H1 (cell line): ENCODE measurements at regions of chr12 and their contacts with region 1.

Region 1: DNA sequence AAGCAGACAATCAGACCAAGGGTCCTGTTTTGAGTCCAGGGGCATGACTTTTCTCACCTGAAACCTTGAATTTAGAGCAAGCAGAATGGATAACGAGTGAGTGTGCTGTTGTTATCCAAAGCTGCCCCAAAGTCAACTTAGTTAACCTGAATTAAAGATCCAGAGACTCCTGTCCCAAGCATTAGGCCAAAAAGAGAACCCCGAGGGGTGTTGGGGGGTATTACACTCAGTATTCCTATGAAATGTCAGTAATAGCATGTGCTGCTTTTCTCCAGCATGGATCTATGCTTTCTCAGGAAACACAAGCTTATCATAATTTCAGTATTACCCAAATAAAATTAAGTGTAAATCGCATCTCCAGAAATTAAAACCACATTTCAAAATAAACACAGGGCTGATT is 19.0 kb downstream of the EIF4B start:
- DNase-seq: no peak
- H3K4me3 ChIP-seq: no peak overlapping the region
- H3K27ac ChIP-seq: no peak overlapping the region
- H3K4me1 ChIP-seq: no peaks in the 10 kb centered on the region
- H3K27me3 ChIP-seq: no peaks in the 10 kb centered on the region
- CTCF ChIP-seq: no peak
- EP300 ChIP-seq: no peak
- POLR2A ChIP-seq: no peak
- RAD21 ChIP-seq: no peak

Region 2: DNA sequence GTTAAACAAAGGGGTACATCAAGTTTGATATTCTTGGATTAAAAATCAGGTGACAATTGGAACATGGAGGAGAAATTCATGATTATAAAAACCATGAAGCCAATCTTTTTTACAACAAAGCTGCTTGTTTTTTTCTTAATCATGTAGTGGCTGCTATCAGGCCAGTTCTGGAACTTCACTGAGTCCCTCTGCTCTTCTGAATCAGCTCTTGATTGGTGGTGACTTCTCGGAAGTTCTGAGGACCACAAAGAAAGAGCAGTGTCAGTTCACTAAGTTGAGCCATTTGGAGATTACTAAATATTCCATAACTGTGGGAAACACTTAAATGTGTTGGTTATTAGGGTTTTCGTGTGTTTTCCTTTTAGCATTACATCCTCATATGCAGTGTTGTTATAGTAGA is 10.5 kb before region 1 on chr12:
- CTCF ChIA-PET with region 1: interaction called, 12 read pairs
- POLR2A ChIA-PET with region 1: interaction called, 711 read pairs
- DNase-seq: no peak
- H3K4me3 ChIP-seq: no peak overlapping the region
- H3K27ac ChIP-seq: no peak overlapping the region
- H3K4me1 ChIP-seq: no peaks in the 10 kb centered on the region; a peak in 1 of 7 replicates
- H3K27me3 ChIP-seq: no peaks in the 10 kb centered on the region
- CTCF ChIP-seq: no peak
- EP300 ChIP-seq: no peak
- POLR2A ChIP-seq: no peak
- RAD21 ChIP-seq: no peak

Region 3: DNA sequence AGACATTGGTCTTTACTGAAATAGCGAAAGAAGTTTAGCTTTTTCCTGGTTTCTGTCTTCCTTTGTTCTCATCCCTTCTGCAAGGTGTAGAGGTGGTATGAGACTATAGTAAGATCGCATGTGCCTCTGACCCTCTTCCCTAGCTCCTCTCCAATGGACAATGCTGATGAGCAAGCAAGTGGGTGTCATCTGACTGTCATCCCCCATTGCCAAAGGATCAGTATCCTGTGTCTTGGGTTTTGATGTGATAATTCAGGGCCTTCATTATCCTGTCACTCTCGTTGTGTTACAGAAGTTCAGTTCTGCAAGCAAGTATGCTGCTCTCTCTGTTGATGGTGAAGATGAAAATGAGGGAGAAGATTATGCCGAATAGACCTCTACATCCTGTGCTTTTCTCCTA is 14.6 kb after region 1 on chr12:
- CTCF ChIA-PET with region 1: interaction called, 32 read pairs
- POLR2A ChIA-PET with region 1: interaction called, 97 read pairs
- DNase-seq: no peak
- H3K4me3 ChIP-seq: no peak overlapping the region
- H3K27ac ChIP-seq: no peak overlapping the region
- H3K4me1 ChIP-seq: peaks cover 2 to 15% (median 9%) of the 10 kb centered on the region in 4 experiments; a peak in 6 of 7 replicates
- H3K27me3 ChIP-seq: peaks cover 0 to 9% (median 8%) of the 10 kb centered on the region in 4 experiments; a peak in 6 of 7 replicates
- CTCF ChIP-seq: no peak
- EP300 ChIP-seq: no peak
- POLR2A ChIP-seq: no peak
- RAD21 ChIP-seq: no peak

Region 4: DNA sequence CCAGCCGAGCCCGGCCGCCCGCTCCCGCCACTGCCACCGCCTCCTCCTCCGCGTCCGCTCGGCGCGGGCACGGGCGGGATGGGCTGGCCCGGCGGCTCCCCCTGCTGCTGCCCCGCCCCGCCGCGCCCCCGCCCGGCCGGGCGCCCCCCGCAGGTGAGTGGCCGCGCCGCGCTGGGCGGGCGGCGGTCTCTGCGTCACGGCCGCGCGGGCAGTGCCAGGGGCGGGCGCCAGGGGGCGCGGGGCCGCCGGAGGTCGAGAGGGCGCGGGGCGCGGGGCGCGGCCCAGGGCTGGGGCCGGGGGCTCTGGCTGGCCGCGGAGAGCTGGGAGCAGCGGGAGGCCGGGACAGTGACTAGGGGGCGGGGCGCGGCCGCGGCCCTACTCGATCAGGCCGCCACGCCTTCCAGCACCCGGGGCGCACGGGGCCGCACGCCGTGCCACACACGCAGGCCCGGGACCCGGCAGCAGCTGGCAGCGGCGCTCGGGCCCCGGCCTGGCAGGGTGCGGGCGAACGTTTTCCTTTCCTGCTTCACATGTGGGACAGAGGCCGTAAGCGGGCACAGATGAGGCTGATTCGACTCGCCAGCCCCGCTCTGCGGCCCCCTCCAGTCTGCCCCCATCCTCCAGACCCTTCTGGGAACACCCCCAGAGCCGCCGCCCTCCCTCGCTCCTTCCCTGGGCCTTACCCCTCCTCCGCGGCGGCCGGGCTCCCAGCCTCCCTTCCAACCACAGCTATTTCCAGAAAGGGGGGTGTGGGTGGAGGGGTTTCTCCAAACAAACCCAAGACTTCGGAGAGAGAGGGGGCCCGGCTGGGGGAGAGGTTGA is 22.2 kb after region 1 on chr12:
- CTCF ChIA-PET with region 1: interaction called, 13 read pairs
- POLR2A ChIA-PET with region 1: interaction called, 63 read pairs
- DNase-seq: peak in 1 of 2 experiments; percentile 83
- H3K4me3 ChIP-seq: peak overlapping the region; percentile 34 to 94 (median 50); a peak in 6 of 8 replicates
- H3K27ac ChIP-seq: no peak overlapping the region
- H3K4me1 ChIP-seq: peaks cover 29 to 75% (median 53%) of the 10 kb centered on the region in 4 experiments
- H3K27me3 ChIP-seq: peaks cover 0 to 20% (median 17%) of the 10 kb centered on the region in 4 experiments; a peak in 6 of 7 replicates
- CTCF ChIP-seq: peak in 2 of 3 experiments; percentile 20 to 48; a peak in 3 of 4 replicates
- EP300 ChIP-seq: no peak
- POLR2A ChIP-seq: no peak
- RAD21 ChIP-seq: 0 out of 4 replicates have a peak, but pooled peaks of 1 of the 2 experiments have one; percentile 6

Region 5: DNA sequence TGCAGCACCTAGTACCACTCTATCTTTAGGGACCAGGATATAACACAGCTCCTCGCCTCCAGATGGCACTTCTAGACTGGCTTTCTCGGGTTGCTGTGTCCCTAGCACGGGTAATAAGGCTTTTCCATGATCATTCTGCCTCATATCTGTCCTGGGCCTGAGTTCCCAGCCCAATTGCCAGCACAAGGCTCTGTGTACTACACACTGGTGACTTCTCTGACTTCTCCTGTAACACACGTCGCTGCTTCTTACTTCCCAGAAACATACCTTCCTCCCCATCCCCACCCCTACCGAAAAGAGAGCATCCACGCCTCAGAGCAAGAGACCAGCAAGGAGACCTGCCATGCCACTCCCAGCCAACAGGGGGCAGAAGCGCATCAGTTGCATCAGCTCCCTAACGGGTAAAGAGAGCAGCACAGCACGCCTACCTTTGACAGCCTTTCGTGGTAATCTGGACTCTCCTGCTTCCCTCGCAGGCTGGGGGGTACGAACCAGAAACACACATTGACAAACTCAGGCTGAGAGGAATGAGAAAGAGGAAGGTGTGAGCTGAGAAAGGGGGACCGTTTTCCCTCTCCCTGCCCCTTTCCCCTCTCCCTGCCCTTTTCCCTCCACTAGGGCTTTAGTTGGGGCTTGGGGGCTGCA is 134.1 kb after region 1 on chr12:
- CTCF ChIA-PET with region 1: no interaction called
- POLR2A ChIA-PET with region 1: no interaction called
- DNase-seq: peak in 1 of 2 experiments; percentile 97
- H3K4me3 ChIP-seq: peak overlapping the region in 1 of 4 experiments; percentile 45; a peak in 3 of 8 replicates
- H3K27ac ChIP-seq: no peak overlapping the region
- H3K4me1 ChIP-seq: peaks cover 0 to 3% (median 1%) of the 10 kb centered on the region in 4 experiments; a peak in 2 of 7 replicates
- H3K27me3 ChIP-seq: peaks cover 0 to 13% (median 7%) of the 10 kb centered on the region in 4 experiments; a peak in 5 of 7 replicates
- CTCF ChIP-seq: peak; percentile 96 to 100 (median 100)
- EP300 ChIP-seq: no peak
- POLR2A ChIP-seq: no peak
- RAD21 ChIP-seq: peak; percentile 81 to 87